ENCODE measurements at regions of chr1 and their contacts with region 1.

Region 1: GRCh38 chr1:209747580-209748262 is 8.1 kb upstream of the TRAF3IP3 start:
- DNase-seq: peak; percentile 63
- H3K4me3 ChIP-seq: peak overlapping the region in 3 of 4 donors; percentile 26 to 54 (median 31)
- H3K27ac ChIP-seq: peak overlapping the region; percentile 39 to 66 (median 63)
- H3K4me1 ChIP-seq: peaks cover 4 to 35% (median 10%) of the 10 kb centered on the region in 3 donors
- H3K27me3 ChIP-seq: no peaks in the 10 kb centered on the region
- CTCF ChIP-seq: peak; percentile 94 to 99 (median 98)
- POLR2A ChIP-seq: peak in 1 of 4 donors; percentile 4

Region 2: GRCh38 chr1:209697126-209697525 is 50.6 kb before region 1 on chr1:
- intact Hi-C with region 1: loop called (anchors 5 kb)
- DNase-seq: no peak
- H3K4me3 ChIP-seq: no peak overlapping the region
- H3K27ac ChIP-seq: no peak overlapping the region
- H3K4me1 ChIP-seq: peaks cover 0 to 12% (median 7%) of the 10 kb centered on the region in 3 donors
- H3K27me3 ChIP-seq: no peaks in the 10 kb centered on the region
- CTCF ChIP-seq: no peak
- POLR2A ChIP-seq: no peak

Measured in esophagus squamous epithelium (tissue), 5 donors.